ENCODE measurements at regions of chr11 and their contacts with region 1.

Region 1: DNA sequence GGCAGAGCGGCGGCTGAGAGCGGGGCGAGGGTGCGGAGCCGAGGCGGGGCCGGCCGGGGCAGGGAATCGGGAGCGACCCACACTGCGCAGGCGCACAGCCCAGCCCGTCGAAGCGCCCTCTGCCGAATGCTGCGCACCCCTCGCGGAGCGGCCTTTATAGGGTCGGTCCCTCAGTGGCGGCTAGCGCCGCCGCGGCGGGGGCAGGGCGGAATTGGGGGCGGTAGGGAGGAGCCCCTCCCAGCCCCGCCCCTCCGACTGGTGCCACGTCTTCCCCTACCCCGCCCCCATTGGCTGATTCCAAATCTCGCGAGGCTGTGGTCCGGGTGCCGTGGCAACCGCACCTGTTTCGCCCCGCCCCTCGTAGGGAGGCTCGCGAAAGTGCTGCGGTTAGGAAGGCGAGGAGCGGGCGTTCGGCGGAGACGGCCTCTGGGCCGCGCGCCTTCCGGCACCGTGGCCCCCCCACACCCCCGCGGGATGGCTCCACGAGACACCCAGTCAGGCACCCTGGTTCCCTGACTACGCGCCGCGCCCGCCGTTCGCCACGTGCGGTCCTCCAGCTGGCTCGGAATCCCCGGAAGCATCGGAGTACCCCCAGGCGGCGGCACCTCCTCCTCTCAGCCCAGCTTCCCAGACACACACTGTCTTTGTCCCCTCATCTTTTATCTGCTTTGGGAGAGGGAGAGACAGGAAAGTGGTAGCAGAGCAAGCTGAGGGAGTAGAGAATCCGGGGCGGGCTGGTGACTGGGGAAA is at the start of gene EHD1:
- DNase-seq: peak; percentile 99
- H3K4me3 Mint-ChIP-seq: peak within 1 kb of the TSS; percentile 99
- H3K27ac Mint-ChIP-seq: peak within 1 kb of the TSS; percentile 83
- H3K4me1 Mint-ChIP-seq: peaks cover 64% of the 10 kb centered on the region
- H3K27me3 Mint-ChIP-seq: no peaks in the 10 kb centered on the region
- total RNA-seq, gene EHD1: 88.0 and 96.9 TPM in 2 replicates

Region 2: GRCh38 chr11:64803163-64803845 is 75.4 kb before region 1 on chr11 and contains the start of gene MAP4K2:
- intact Hi-C with region 1: loop called (anchors 5 kb)
- DNase-seq: peak; percentile 89
- H3K4me3 Mint-ChIP-seq: peak within 1 kb of the TSS; percentile 88
- H3K27ac Mint-ChIP-seq: peak within 1 kb of the TSS; percentile 83
- H3K4me1 Mint-ChIP-seq: peaks cover 26% of the 10 kb centered on the region
- H3K27me3 Mint-ChIP-seq: no peaks in the 10 kb centered on the region
- total RNA-seq, gene MAP4K2: 70.2 and 70.7 TPM in 2 replicates

Region 3: GRCh38 chr11:64856382-64857227 is 22.1 kb before region 1 on chr11:
- intact Hi-C with region 1: loop called (anchors 1 kb)
- DNase-seq: peak; percentile 35
- H3K4me3 Mint-ChIP-seq: peak overlapping the region; percentile 52
- H3K27ac Mint-ChIP-seq: peak overlapping the region; percentile 59
- H3K4me1 Mint-ChIP-seq: peaks cover 78% of the 10 kb centered on the region
- H3K27me3 Mint-ChIP-seq: no peaks in the 10 kb centered on the region

Region 4: DNA sequence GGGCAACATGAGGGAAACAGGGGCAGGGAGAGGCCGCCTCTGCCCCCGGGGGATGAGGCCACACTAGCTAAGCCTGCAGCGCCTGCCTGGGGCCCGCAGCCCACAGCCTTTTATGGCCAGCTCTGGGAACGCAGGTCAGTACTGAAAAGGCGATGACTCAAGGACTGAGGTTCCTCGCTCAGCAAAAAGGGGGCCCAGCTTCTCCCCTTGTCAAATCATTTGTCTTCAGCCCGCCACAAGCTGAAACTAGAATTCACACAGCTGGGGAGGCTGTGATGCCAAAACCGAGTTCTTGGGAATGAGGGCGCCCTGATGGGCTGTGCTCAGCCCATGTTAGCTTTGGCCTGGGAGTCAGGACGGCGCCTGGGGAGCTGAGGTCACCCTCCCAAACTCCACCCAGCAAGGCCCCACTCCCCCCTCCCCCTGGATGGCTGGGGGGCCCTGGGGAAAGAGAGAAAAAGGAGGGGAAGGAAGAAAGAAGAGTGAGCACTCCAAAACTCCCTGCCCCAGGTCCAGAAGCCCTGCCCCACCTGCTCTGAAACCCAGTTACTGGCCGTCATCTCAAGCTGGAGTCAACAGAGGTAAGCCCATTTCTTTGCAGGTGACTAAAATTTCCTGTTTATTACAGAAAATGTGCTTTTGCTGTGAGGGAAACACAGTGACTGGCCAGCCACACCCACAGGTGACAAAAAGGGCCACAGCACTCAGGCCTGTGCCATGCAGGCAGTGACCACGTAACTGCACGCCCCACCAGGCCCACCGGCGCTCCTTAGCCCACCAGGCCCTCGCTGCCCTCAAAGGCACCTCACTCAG is 14.0 kb before region 1 on chr11:
- intact Hi-C with region 1: loop called (anchors 1 kb)
- DNase-seq: no peak
- H3K4me3 Mint-ChIP-seq: peak overlapping the region; percentile 58
- H3K27ac Mint-ChIP-seq: peak overlapping the region; percentile 92
- H3K4me1 Mint-ChIP-seq: peaks cover 79% of the 10 kb centered on the region
- H3K27me3 Mint-ChIP-seq: no peaks in the 10 kb centered on the region